ENCODE measurements at regions of chr9 and their contacts with region 1.

Region 1: GRCh38 chr9:109232449-109233237 is 65.6 kb upstream of the FRRS1L start:
- DNase-seq: no peak
- H3K4me3 ChIP-seq: no peak overlapping the region
- H3K27ac ChIP-seq: no peak overlapping the region
- H3K4me1 ChIP-seq: no peaks in the 10 kb centered on the region
- H3K27me3 ChIP-seq: no peaks in the 10 kb centered on the region
- CTCF ChIP-seq: no peak
- EP300 ChIP-seq: no peak
- POLR2A ChIP-seq: no peak
- RAD21 ChIP-seq: no peak

Region 2: DNA sequence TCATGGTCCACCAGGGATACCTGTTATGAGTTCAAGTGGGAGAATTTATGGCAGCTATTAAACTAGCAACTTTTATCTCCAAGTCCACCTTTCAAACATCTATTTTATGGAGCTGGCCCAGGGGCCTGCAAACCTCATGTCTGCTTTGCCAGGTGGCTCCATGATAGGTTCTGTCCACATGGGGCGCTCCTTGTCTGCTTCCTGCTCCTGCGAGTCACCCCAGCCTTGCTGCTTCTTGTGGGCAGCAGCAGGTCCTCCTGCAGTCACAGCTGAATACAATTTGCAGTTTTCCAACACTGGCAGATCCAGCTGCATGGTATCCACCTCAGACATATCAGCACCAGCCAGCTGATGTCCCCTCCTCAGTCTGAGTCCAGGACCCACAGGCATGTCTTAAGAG is 26.0 kb before region 1 on chr9:
- CTCF ChIA-PET with region 1: interaction called, 18 read pairs
- POLR2A ChIA-PET with region 1: no interaction called
- DNase-seq: peak in 1 of 2 experiments; percentile 17
- H3K4me3 ChIP-seq: no peak overlapping the region
- H3K27ac ChIP-seq: no peak overlapping the region
- H3K4me1 ChIP-seq: no peaks in the 10 kb centered on the region
- H3K27me3 ChIP-seq: no peaks in the 10 kb centered on the region
- CTCF ChIP-seq: peak; percentile 40 to 54 (median 45)
- EP300 ChIP-seq: no peak
- POLR2A ChIP-seq: no peak
- RAD21 ChIP-seq: peak; percentile 42 to 50; a peak in 2 of 4 replicates

Measured in H1 (cell line).